Sigmoid colon (tissue), 7 donors: ENCODE measurements at regions of chr6 and their contacts with region 1.

Region 1: GRCh38 chr6:137780447-137781034 is 86.5 kb upstream of the TNFAIP3 start:
- DNase-seq: no peak
- H3K4me3 ChIP-seq: no peak overlapping the region
- H3K27ac ChIP-seq: peak overlapping the region; percentile 55 to 88 (median 80)
- H3K4me1 ChIP-seq: peaks cover 0 to 65% (median 31%) of the 10 kb centered on the region in 4 donors
- H3K27me3 ChIP-seq: no peaks in the 10 kb centered on the region
- CTCF ChIP-seq: no peak
- EP300 ChIP-seq: no peak
- POLR2A ChIP-seq: no peak

Region 2: DNA sequence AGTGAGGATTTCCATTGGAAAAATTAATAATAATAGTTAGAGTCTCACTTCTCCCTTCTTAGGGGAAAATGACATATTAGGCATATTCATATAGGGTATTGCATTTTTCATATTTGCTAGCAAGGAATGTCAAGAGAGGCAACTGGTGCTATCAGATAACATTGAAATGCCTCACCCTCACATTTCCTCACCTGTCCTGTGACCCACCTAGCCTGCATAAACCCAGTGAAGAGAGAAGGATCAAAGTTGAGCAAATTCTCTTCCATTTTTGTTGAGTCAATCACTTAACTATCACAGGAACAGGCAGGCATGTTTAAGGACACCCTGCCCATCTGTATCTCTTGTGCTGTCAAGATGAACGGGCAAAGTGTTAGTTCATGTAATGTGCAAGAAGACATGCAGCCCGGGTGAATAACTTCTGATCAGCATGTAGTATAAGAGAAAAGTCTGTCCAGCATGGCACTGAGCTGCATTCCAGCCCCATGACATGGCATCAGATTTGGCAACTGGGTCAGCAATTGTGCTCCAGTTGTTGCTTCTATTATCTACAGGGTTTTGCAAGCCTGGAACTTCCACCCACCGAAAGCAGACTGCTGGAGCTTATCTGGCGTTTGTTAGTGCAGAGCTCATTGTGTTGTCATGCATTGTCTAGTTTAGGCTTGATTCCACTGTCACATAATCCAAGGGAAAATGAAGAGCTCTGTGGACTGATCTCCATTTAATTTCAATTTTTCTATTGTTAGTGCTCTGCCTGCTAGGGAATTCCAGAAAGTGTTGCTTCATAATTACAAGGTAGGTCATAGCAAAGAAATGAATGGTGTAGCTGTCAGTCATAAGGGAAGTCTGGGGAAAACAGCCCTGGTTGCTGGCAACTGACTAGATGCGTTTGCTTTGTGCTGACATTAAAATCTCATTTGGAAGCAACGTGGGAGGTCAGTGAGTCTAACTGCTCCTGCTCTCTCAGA is 51.9 kb before region 1 on chr6:
- intact Hi-C with region 1: loop called (anchors 5 kb)
- DNase-seq: no peak
- H3K4me3 ChIP-seq: no peak overlapping the region
- H3K27ac ChIP-seq: peak overlapping the region in 2 of 4 donors; percentile 42 to 47
- H3K4me1 ChIP-seq: peaks cover 0 to 29% (median 13%) of the 10 kb centered on the region in 4 donors
- H3K27me3 ChIP-seq: no peaks in the 10 kb centered on the region
- CTCF ChIP-seq: no peak
- EP300 ChIP-seq: no peak
- POLR2A ChIP-seq: no peak